CD8-positive, alpha-beta T cell (primary cell): ENCODE measurements at regions of chr7 and their contacts with region 1.

Region 1: GRCh38 chr7:150716368-150716767 is at the start of gene GIMAP1:
- DNase-seq: peak in 8 of 9 experiments; percentile 59 to 85 (median 73)
- ATAC-seq: peak; percentile 84
- H3K4me3 ChIP-seq: peak within 1 kb of the TSS; percentile 90 to 91
- H3K4me3 Mint-ChIP-seq: peak within 1 kb of the TSS; percentile 95
- H3K27ac ChIP-seq: peak within 1 kb of the TSS; percentile 73 to 87
- H3K27ac Mint-ChIP-seq: peak within 1 kb of the TSS; percentile 96
- H3K4me1 ChIP-seq: peaks cover 50% of the 10 kb centered on the region
- H3K4me1 Mint-ChIP-seq: peaks cover 67% of the 10 kb centered on the region
- H3K27me3 ChIP-seq: no peaks in the 10 kb centered on the region
- H3K27me3 Mint-ChIP-seq: no peaks in the 10 kb centered on the region
- CTCF ChIP-seq: no peak
- total RNA-seq, gene GIMAP1: 6.1 to 6.2 TPM

Region 2: GRCh38 chr7:150520145-150520544 is 196.2 kb before region 1 on chr7:
- CTCF ChIA-PET with region 1: interaction called, 3 read pairs
- POLR2A ChIA-PET with region 1: interaction called, 29 read pairs
- intact Hi-C with region 1: no loop called
- DNase-seq: peak in 6 of 9 experiments; percentile 9 to 75 (median 33)
- ATAC-seq: peak; percentile 27
- H3K4me3 ChIP-seq: peak overlapping the region; percentile 58 to 76
- H3K4me3 Mint-ChIP-seq: peak overlapping the region; percentile 100
- H3K27ac ChIP-seq: peak overlapping the region; percentile 58 to 75
- H3K27ac Mint-ChIP-seq: peak overlapping the region; percentile 91
- H3K4me1 ChIP-seq: peaks cover 12% of the 10 kb centered on the region
- H3K4me1 Mint-ChIP-seq: peaks cover 44% of the 10 kb centered on the region
- H3K27me3 ChIP-seq: no peaks in the 10 kb centered on the region
- H3K27me3 Mint-ChIP-seq: no peaks in the 10 kb centered on the region
- CTCF ChIP-seq: no peak

Region 3: DNA sequence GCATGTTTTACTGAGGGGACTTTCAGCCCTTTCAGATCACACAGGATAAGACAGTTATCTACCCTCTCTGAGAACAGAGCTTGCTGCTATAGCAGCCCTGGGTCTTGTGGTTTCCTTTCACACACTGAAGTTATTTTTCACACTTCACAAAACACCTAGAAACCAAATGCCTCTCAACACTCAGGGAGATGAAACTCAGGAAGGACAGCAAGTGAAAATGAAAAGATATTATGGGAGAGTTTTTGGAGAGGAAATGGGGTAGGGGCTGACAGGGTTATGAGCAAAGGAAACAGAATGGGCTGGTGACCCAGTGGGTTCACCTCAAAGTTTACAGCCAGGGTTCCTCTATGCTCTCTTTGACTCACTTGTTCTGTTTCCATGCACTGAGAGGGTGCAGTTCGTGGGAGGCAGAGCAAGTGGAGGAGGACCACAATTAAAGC is 47.9 kb before region 1 on chr7:
- CTCF ChIA-PET with region 1: interaction called, 10 read pairs
- POLR2A ChIA-PET with region 1: interaction called, 19 read pairs
- intact Hi-C with region 1: loop called in 1 of 2 experiments (anchors 1 kb)
- DNase-seq: peak in 6 of 9 experiments; percentile 60 to 94 (median 72)
- ATAC-seq: peak; percentile 76
- H3K4me3 ChIP-seq: peak overlapping the region in 1 of 2 experiments; percentile 17
- H3K4me3 Mint-ChIP-seq: peak overlapping the region; percentile 36
- H3K27ac ChIP-seq: peak overlapping the region; percentile 63 to 95
- H3K27ac Mint-ChIP-seq: peak overlapping the region; percentile 97
- H3K4me1 ChIP-seq: peaks cover 88% of the 10 kb centered on the region
- H3K4me1 Mint-ChIP-seq: peaks cover 90% of the 10 kb centered on the region
- H3K27me3 ChIP-seq: no peaks in the 10 kb centered on the region
- H3K27me3 Mint-ChIP-seq: no peaks in the 10 kb centered on the region
- CTCF ChIP-seq: no peak

Region 4: GRCh38 chr7:150675714-150676113 is 40.7 kb before region 1 on chr7:
- CTCF ChIA-PET with region 1: no interaction called
- POLR2A ChIA-PET with region 1: interaction called, 14 read pairs
- intact Hi-C with region 1: no loop called
- DNase-seq: no peak
- ATAC-seq: no peak
- H3K4me3 ChIP-seq: peak overlapping the region in 1 of 2 experiments; percentile 24
- H3K4me3 Mint-ChIP-seq: peak overlapping the region; percentile 36
- H3K27ac ChIP-seq: peak overlapping the region; percentile 12 to 70
- H3K27ac Mint-ChIP-seq: peak overlapping the region; percentile 83
- H3K4me1 ChIP-seq: peaks cover 69% of the 10 kb centered on the region
- H3K4me1 Mint-ChIP-seq: peaks cover 81% of the 10 kb centered on the region
- H3K27me3 ChIP-seq: no peaks in the 10 kb centered on the region
- H3K27me3 Mint-ChIP-seq: no peaks in the 10 kb centered on the region
- CTCF ChIP-seq: no peak

Region 5: DNA sequence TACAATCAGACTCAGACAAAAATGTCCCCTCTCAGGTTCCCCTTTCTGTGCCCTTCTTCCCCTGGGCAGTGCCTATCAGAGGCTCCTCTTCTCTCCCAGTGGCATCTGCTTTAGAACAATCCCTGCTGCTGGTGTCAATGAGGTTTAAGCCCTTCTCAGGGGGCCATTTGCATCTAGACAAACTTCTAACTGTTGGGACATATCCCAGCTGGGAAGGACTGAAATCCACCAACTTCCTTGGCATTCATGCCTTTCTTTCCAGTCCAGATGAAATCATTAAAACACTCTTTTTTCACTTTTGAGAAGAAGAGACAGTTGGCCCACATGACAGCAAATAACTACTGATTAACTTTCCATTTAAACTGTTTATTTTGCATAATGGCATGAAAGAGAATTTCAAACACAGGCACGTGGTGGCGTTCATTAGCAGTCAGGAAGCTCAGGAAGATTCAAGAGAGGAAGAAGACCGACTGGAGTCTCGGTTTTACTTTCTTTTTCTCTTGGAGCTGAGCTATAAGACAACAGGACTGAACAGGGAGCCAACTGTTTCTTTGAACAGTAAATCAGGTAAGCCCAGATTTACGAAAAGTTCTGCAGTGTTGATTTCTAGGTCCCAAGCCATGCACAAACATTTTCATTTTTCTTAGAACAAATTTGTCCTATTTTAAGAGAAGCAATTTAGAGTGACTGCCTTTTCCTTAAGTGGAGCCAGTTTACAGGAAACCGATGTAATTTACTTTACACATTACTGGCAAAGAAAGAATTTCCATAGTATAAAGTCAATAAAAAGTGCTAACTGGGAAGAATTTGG is 30.9 kb before region 1 on chr7 and contains the start of gene GIMAP2:
- CTCF ChIA-PET with region 1: interaction called, 17 read pairs
- POLR2A ChIA-PET with region 1: interaction called, 93 read pairs
- intact Hi-C with region 1: loop called in 1 of 2 experiments (anchors 1 kb)
- DNase-seq: peak in 3 of 9 experiments; percentile 26 to 81 (median 68)
- ATAC-seq: peak; percentile 77
- H3K4me3 ChIP-seq: peak within 1 kb of the TSS; percentile 62 to 69
- H3K4me3 Mint-ChIP-seq: peak within 1 kb of the TSS; percentile 96
- H3K27ac ChIP-seq: peak within 1 kb of the TSS; percentile 66 to 81
- H3K27ac Mint-ChIP-seq: peak within 1 kb of the TSS; percentile 99
- H3K4me1 ChIP-seq: peaks cover 54% of the 10 kb centered on the region
- H3K4me1 Mint-ChIP-seq: peaks cover 82% of the 10 kb centered on the region
- H3K27me3 ChIP-seq: no peaks in the 10 kb centered on the region
- H3K27me3 Mint-ChIP-seq: no peaks in the 10 kb centered on the region
- CTCF ChIP-seq: no peak
- total RNA-seq, gene GIMAP2: 58.4 to 58.8 TPM

Region 6: GRCh38 chr7:150695654-150696053 is 20.7 kb before region 1 on chr7:
- CTCF ChIA-PET with region 1: interaction called, 8 read pairs
- POLR2A ChIA-PET with region 1: interaction called, 93 read pairs
- intact Hi-C with region 1: loop called in 1 of 2 experiments (anchors 2 kb)
- DNase-seq: no peak
- ATAC-seq: no peak
- H3K4me3 ChIP-seq: no peak overlapping the region
- H3K4me3 Mint-ChIP-seq: no peak overlapping the region
- H3K27ac ChIP-seq: no peak overlapping the region
- H3K27ac Mint-ChIP-seq: no peak overlapping the region
- H3K4me1 ChIP-seq: peaks cover 6% of the 10 kb centered on the region
- H3K4me1 Mint-ChIP-seq: peaks cover 14% of the 10 kb centered on the region
- H3K27me3 ChIP-seq: no peaks in the 10 kb centered on the region
- H3K27me3 Mint-ChIP-seq: no peaks in the 10 kb centered on the region
- CTCF ChIP-seq: no peak

Region 7: GRCh38 chr7:150838970-150839650 is 122.7 kb after region 1 on chr7:
- CTCF ChIA-PET with region 1: no interaction called
- POLR2A ChIA-PET with region 1: no interaction called
- intact Hi-C with region 1: no loop called
- DNase-seq: peak in 1 of 9 experiments; percentile 9
- ATAC-seq: no peak
- H3K4me3 ChIP-seq: no peak overlapping the region
- H3K4me3 Mint-ChIP-seq: no peak overlapping the region
- H3K27ac ChIP-seq: no peak overlapping the region
- H3K27ac Mint-ChIP-seq: no peak overlapping the region
- H3K4me1 ChIP-seq: no peaks in the 10 kb centered on the region
- H3K4me1 Mint-ChIP-seq: no peaks in the 10 kb centered on the region
- H3K27me3 ChIP-seq: no peaks in the 10 kb centered on the region
- H3K27me3 Mint-ChIP-seq: peaks cover 3% of the 10 kb centered on the region
- CTCF ChIP-seq: no peak